Ascending aorta (tissue), 2 donors: ENCODE measurements at regions of chr11 and their contacts with region 1.

Region 1: GRCh38 chr11:65477149-65477965 is 21.5 kb upstream of the MALAT1 start:
- DNase-seq: peak; percentile 88 to 98
- H3K4me3 ChIP-seq: peak overlapping the region; percentile 73 to 76
- H3K27ac ChIP-seq: peak overlapping the region; percentile 97 to 98
- H3K4me1 ChIP-seq: peaks cover 28 to 66% of the 10 kb centered on the region in 2 donors
- H3K27me3 ChIP-seq: no peaks in the 10 kb centered on the region
- CTCF ChIP-seq: no peak

Region 2: DNA sequence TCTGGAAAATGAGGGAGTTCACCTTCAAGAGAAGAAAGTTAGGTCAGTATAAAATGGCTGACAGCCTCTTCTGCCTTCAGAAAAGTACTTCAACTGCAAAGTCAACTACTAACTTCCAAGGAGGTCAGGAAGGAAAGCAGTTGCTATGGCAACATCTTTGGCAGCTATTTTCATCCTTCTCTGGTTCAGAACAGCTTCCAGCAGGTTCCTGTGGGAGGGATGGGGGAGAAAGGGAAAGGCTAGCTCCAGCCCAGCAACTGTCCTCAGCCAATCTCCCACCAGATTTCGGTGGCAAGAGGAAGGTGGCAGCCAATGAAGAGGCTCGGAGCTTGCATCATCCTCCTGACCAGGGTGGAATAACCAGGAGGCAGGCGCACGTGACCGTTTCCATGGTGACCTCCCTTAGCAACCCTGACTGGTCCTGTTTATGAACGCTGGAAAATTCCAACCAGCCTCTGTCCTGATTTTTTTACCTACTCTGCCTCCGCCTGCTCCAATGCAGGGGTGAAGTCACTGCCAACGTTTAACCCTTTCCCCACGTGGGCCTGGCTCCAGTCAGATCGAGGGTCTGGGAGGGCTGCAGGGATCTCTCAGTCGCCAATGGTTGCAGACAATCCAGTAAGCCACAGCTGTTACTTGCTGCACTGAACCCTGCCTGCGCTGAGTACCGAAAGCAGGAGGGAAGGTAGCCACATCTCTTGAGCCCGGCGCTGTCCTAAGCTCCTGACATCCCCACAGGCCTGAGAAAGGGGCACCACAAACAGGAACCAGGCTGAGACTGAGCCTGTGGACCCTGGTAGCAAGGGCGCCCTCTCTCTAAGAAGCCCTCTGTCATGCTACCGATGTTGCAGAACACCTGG is 10.3 kb after region 1 on chr11:
- intact Hi-C with region 1: loop called (anchors 1 kb)
- DNase-seq: peak; percentile 99 to 100
- H3K4me3 ChIP-seq: peak overlapping the region; percentile 42 to 51
- H3K27ac ChIP-seq: peak overlapping the region; percentile 97 to 99
- H3K4me1 ChIP-seq: peaks cover 50 to 75% of the 10 kb centered on the region in 2 donors
- H3K27me3 ChIP-seq: no peaks in the 10 kb centered on the region
- CTCF ChIP-seq: no peak